GM23248 (cell line): ENCODE measurements at regions of chr11 and their contacts with region 1.

Region 1: DNA sequence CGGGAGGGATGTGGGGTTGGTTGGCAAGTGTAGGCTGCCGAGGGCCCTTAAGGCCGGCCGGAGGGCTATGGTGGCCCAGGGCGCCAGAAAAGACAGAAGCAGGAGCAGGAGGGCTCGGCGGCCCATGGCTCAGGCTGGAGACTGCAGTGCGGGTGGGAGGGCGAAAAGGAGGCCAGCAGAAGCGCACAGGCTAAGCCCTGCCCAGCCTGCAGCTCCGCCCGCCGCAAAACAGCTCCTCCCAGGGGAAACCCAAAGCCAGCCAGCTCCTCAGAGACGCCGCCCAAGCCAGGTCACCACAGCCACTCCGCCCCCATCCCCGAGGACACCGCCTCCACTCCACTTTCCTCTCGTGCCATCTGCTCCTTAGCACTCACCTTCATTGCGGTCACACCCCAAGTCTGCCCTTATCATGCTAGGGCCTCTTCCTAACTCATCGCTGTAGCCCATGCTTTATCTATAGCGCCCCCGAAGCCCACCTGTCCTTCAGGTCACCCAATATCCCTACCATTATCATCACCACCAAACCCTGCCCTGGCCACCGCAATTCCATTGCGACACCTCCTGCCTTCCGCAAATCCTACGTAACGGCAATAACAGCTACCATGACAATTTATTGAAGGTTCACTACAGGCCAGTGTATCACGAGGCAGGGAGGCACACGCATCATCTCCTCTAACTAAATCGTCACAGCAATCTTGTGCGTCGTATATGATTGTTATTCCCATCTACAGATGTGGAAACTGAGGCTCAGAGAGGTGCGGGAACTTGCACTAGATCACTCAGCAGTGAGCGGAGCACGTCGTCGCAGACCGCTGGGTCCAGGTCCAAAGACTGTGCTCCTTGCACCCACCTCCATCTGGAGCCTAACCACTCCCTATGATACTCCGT is at the start of gene PRCP:
- DNase-seq: peak; percentile 97
- H3K4me3 ChIP-seq: peak within 1 kb of the TSS; percentile 94
- H3K27ac ChIP-seq: peak within 1 kb of the TSS; percentile 91
- H3K4me1 ChIP-seq: 0 out of 2 replicates have a peak, but pooled peaks cover 5% of the 10 kb centered on the region
- H3K27me3 ChIP-seq: no peaks in the 10 kb centered on the region
- total RNA-seq, gene PRCP: 66.3 and 84.1 TPM in 2 replicates

Region 2: DNA sequence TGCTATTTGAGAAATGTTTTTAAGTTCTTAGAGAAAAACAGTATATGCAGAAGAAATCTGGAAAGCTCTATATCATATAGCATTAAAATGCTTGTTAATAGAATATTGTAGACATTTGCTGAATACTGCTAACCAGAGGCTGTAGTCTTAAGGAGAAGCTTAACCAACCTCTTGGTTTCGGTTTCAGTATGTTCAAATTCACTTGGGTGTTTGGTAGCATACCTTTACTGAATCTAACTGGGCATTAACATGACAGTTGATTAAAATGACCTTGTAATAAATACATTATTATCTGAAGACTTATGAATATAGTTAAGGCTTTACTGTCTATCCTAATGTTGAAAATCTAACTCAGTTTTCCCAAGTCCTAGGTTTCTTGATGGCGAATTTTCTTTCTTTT is 261.9 kb after region 1 on chr11:
- in situ Hi-C with region 1: loop called (anchors 10 kb)
- DNase-seq: peak; percentile 33
- H3K4me3 ChIP-seq: peak overlapping the region; percentile 99
- H3K27ac ChIP-seq: 0 out of 2 replicates have a peak overlapping the region, but pooled peaks have one; percentile 98
- H3K4me1 ChIP-seq: peaks cover 30% of the 10 kb centered on the region
- H3K27me3 ChIP-seq: no peaks in the 10 kb centered on the region

Region 3: DNA sequence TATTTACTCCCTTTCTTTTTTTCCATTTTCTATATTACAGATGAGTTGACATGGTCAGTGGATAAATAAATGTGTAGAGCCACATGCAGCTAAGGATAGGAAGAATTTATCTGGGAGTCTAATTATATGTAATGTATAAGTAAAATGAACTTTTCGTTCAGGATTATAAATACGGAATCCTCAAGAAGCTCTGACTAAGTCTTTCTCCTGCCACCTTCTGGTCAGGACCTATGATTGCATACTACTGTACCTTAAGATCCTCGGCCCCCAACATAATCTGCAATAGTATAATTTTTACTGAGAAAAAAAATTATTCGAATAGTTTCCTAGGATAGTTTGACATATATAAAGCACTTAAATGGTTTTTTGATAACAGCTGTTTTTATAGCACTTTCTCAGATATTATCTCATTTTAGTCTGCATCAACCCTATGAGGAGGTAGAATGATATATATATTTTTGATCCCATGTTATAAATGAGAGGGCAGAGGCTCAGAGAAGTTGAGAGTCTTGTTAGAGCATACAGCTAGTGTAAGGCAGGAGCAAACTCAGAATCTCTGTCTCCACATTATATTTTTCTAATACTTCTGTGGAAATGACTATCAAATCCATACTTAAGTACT is 349.6 kb after region 1 on chr11:
- in situ Hi-C with region 1: loop called (anchors 10 kb)
- DNase-seq: peak; percentile 69
- H3K4me3 ChIP-seq: no peak overlapping the region
- H3K27ac ChIP-seq: no peak overlapping the region
- H3K4me1 ChIP-seq: no peaks in the 10 kb centered on the region
- H3K27me3 ChIP-seq: no peaks in the 10 kb centered on the region